Caco-2 (cell line): ENCODE measurements at regions of chr22 and their contacts with region 1.

Region 1: GRCh38 chr22:20495861-20496681 is 476 bp upstream of the KLHL22 start:
- DNase-seq: peak; percentile 88 to 95
- H3K4me3 ChIP-seq: peak overlapping the region; percentile 53
- H3K4me3 Mint-ChIP-seq: peak overlapping the region; percentile 98
- H3K27ac Mint-ChIP-seq: peak overlapping the region; percentile 86
- H3K4me1 ChIP-seq: no peaks in the 10 kb centered on the region
- H3K4me1 Mint-ChIP-seq: peaks cover 6% of the 10 kb centered on the region
- H3K27me3 ChIP-seq: no peaks in the 10 kb centered on the region
- H3K27me3 Mint-ChIP-seq: no peaks in the 10 kb centered on the region
- CTCF ChIP-seq: peak; percentile 80 to 87

Region 2: DNA sequence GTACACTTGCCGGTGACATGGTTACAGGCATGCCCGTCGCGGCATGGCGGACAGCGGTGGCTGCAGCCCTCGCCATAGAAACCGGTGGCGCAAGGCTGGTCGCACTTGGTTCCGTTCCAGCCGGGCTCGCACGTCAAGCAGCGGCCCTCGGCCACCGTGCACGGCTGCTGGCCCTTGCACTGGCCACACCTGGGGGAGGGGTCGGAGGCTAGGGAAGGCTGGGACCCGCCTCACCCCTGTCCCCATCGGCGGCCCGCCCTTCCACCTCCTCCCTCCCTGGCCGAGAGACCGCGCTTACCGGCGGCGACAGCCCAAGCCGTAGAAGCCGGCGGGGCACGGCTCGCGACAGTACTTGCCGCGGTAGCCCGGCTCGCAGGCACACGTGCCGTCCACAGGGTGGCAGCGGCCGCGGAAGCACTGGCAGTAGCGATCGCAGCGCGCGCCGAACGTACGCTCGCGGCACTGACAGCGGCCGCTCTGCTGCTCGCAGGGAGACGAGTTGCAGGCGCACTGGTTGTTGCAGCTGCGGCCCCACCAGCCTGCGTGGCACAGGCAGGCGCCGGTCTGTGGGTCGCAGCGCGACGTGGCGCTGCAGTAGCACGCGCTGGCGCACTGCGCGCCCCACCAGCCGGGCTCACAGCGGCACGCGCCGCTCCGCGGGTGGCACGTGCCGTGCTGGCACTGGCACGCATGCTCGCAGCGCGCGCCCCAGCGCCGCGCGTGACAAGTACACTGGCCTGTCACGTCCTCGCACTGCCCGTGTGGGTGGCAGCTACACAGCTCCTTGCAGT is 65.2 kb before region 1 on chr22:
- CTCF ChIA-PET with region 1: no interaction called
- POLR2A ChIA-PET with region 1: no interaction called
- intact Hi-C with region 1: loop called (anchors 1 kb)
- DNase-seq: peak in 1 of 2 experiments; percentile 69
- H3K4me3 ChIP-seq: peak overlapping the region; percentile 31
- H3K4me3 Mint-ChIP-seq: peak overlapping the region; percentile 75
- H3K27ac Mint-ChIP-seq: no peak overlapping the region
- H3K4me1 ChIP-seq: peaks cover 10% of the 10 kb centered on the region
- H3K4me1 Mint-ChIP-seq: peaks cover 5% of the 10 kb centered on the region
- H3K27me3 ChIP-seq: peaks cover 3% of the 10 kb centered on the region
- H3K27me3 Mint-ChIP-seq: peaks cover 10% of the 10 kb centered on the region
- CTCF ChIP-seq: peak; percentile 41 to 42